ENCODE measurements at regions of chr13 and their contacts with region 1.

Region 1: GRCh38 chr13:79668201-79668752 is 187.3 kb downstream of the NDFIP2 start:
- DNase-seq: no peak
- ATAC-seq: no peak
- H3K4me3 ChIP-seq: no peak overlapping the region
- H3K27ac ChIP-seq: no peak overlapping the region
- H3K4me1 ChIP-seq: no peaks in the 10 kb centered on the region
- CTCF ChIP-seq: no peak
- EP300 ChIP-seq: no peak
- POLR2A ChIP-seq: no peak
- RAD21 ChIP-seq: no peak

Region 2: DNA sequence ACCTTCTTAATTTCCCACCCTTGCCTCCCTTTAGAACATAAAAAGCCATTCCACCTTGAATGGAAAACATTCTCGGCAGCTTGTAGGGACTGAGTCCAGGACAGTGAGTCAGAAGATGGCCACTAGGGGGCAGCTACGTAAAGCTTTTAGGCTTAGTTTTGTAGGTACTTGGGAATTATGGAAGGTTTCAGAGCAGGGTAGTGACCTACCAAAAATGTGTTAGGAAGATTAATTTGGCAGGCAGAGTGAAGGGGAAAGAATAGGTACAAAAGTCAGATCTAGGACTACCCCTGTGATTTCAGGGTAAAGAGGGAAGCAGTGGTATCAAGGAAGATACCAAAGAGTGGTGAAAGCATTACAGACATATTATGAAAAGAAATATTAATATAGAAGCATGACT is 11.1 kb after region 1 on chr13:
- CTCF ChIA-PET with region 1: interaction called, 10 read pairs
- POLR2A ChIA-PET with region 1: no interaction called
- DNase-seq: peak; percentile 3 to 69
- ATAC-seq: peak; percentile 73 to 83; a peak in 4 of 6 replicates
- H3K4me3 ChIP-seq: no peak overlapping the region
- H3K27ac ChIP-seq: 0 out of 6 replicates have a peak overlapping the region, but pooled peaks of 1 of the 2 experiments have one; percentile 19
- H3K4me1 ChIP-seq: peaks cover 4% of the 10 kb centered on the region; the same call in 1 of the 3 replicates
- CTCF ChIP-seq: peak; percentile 64
- EP300 ChIP-seq: no peak
- POLR2A ChIP-seq: no peak
- RAD21 ChIP-seq: peak; percentile 76 to 79

Region 3: GRCh38 chr13:79901336-79901735 is 233.1 kb after region 1 on chr13:
- CTCF ChIA-PET with region 1: no interaction called
- POLR2A ChIA-PET with region 1: no interaction called
- DNase-seq: no peak
- ATAC-seq: no peak
- H3K4me3 ChIP-seq: no peak overlapping the region
- H3K27ac ChIP-seq: no peak overlapping the region
- H3K4me1 ChIP-seq: no peaks in the 10 kb centered on the region
- CTCF ChIP-seq: no peak
- EP300 ChIP-seq: no peak
- POLR2A ChIP-seq: no peak
- RAD21 ChIP-seq: no peak